GM10248 (cell line): ENCODE measurements at regions of chr17 and their contacts with region 1.

Region 1: GRCh38 chr17:61412143-61412859 is 12.7 kb downstream of the TBX2 start:
- DNase-seq: peak; percentile 92
- CTCF ChIP-seq: peak; percentile 89

Region 2: DNA sequence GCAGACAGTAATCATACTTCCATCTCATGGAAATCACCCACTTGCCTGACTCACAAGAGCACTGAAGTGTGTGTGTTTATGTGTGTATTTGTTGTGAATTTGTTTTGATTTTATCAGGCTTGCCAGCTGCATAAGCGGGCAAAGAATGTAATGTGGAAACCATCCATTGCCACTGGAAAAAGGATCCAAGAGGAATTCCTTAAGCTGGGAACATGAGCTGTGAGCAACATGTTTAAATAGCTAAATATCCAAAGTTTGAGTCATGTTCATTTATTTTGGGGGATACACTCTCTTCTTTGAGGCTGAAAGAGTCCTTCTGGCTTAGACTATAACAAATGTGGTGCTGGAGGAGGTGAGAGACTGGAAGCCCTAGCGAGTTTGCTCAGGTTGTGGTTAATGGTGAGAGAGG is 211.1 kb before region 1 on chr17:
- CTCF ChIA-PET with region 1: no interaction called
- POLR2A ChIA-PET with region 1: no interaction called
- DNase-seq: no peak
- CTCF ChIP-seq: no peak

Region 3: GRCh38 chr17:61285526-61286320 is 126.6 kb before region 1 on chr17:
- CTCF ChIA-PET with region 1: no interaction called
- POLR2A ChIA-PET with region 1: no interaction called
- DNase-seq: no peak
- CTCF ChIP-seq: no peak

Region 4: DNA sequence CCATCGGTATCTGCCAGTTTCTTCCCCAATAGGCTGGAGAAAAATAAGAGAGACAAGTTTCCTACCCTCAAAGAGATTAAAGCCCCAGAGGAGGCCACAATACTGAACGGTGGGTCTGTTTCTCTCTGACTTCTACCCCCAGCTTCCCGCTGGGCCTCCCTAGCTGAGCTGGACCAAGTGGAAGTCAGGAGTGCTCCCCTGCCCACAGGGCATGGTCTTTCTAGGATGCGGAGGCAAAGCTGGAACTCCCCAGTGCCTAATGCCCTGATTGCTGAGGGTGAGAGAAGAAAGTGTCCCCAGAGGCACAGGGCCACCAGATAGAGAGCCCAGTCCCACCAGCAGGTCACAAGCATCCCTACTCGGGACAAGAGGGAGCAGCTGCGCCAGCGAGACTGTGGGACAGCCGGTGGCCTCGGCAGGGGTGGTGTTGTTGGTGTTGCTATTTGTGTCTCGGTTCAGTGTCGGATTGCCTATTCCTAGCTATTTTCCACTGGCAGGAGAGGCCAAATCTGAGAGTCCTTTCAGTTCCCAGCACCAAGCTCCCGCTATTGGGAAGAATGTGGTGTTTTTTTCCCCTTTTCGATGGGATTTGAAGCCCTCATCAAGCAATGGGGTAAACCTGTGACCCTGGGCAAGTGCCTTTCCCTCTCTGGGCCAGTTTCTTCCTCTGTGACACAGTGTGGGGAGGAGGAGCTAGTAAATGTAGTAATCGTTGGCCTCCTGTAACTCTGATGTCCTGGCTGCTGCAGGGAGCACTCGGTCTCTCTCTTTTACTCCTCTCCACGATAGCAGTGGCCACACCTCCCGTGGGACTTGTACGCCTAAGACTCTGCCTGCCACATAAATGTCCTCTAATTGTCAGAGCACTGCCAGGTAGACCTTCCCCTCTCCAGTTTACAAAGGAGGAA is 35.1 kb before region 1 on chr17:
- CTCF ChIA-PET with region 1: no interaction called
- POLR2A ChIA-PET with region 1: no interaction called
- DNase-seq: no peak
- CTCF ChIP-seq: no peak

Region 5: GRCh38 chr17:61426013-61426730 is 13.9 kb after region 1 on chr17:
- CTCF ChIA-PET with region 1: interaction called, 12 read pairs
- POLR2A ChIA-PET with region 1: no interaction called
- DNase-seq: no peak
- CTCF ChIP-seq: no peak

Region 6: GRCh38 chr17:61551255-61551742 is 139.0 kb after region 1 on chr17:
- CTCF ChIA-PET with region 1: interaction called, 10 read pairs
- POLR2A ChIA-PET with region 1: no interaction called
- DNase-seq: peak; percentile 38
- CTCF ChIP-seq: peak; percentile 52

Region 7: GRCh38 chr17:61843435-61843834 is 431.1 kb after region 1 on chr17:
- CTCF ChIA-PET with region 1: interaction called, 10 read pairs
- POLR2A ChIA-PET with region 1: no interaction called
- DNase-seq: no peak
- CTCF ChIP-seq: no peak